ENCODE measurements at regions of chr7 and their contacts with region 1.

Region 1: GRCh38 chr7:148698397-148699023 is at the start of gene CUL1:
- DNase-seq: peak; percentile 74 to 90 (median 79)
- ATAC-seq: peak; percentile 75 to 79
- H3K4me3 Mint-ChIP-seq: peak within 1 kb of the TSS; percentile 87 to 97 (median 92)
- H3K27ac Mint-ChIP-seq: peak within 1 kb of the TSS; percentile 90 to 97 (median 94)
- H3K4me1 Mint-ChIP-seq: peaks cover 35 to 56% (median 51%) of the 10 kb centered on the region in 4 donors
- H3K27me3 Mint-ChIP-seq: no peaks in the 10 kb centered on the region
- polyA plus RNA-seq, gene CUL1: 39.2 to 50.6 (median 39.6) TPM

Region 2: DNA sequence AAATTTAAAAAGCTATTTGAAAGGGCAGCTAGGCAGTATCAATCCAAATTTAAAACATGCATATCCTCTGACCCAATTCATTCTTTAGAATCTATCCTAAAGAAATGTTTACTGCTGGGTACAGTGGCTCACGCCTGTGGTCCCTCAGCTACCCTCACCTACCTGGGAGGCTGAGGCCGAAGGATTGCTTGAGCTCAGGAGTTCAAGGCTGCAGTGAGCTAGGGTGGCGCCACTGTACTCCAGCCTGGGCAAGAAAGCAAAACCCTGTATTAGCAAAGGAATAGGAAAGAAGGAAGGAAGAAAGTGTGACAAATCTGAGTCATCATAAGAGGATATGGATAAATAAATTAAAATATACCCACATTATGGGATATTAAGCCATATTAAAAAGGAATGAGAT is 71.7 kb before region 1 on chr7:
- POLR2A ChIA-PET with region 1: interaction called, 14 read pairs
- DNase-seq: no peak
- ATAC-seq: no peak
- H3K4me3 Mint-ChIP-seq: peak overlapping the region in 3 of 10 donors; percentile 14 to 64 (median 26)
- H3K27ac Mint-ChIP-seq: peak overlapping the region in 1 of 10 donors; percentile 69
- H3K4me1 Mint-ChIP-seq: peaks cover 28 to 60% (median 50%) of the 10 kb centered on the region in 4 donors
- H3K27me3 Mint-ChIP-seq: peaks cover 0 to 12% (median 2%) of the 10 kb centered on the region in 5 donors

Region 3: DNA sequence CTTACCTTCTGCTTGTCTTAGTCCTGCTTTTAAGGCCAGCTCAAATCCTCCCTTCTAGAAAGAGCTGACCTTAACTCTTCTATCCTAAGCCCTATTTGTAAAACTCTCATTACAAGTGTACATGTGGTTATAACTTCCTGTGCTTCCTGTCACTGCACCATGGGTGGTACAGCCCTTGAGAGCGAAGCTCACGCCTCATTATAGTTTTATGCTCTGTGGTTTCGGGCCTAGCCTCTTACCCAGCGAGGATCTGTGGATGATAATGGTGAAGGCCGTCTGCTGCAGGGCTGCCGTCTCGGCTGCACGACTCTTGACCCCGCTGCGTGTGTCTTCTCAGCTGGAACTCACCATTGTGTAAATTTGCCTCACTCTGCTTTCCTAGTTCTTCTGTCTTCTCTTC is 74.8 kb after region 1 on chr7:
- POLR2A ChIA-PET with region 1: interaction called, 14 read pairs
- DNase-seq: peak in 9 of 10 donors; percentile 3 to 70 (median 22)
- ATAC-seq: peak; percentile 97 to 99
- H3K4me3 Mint-ChIP-seq: peak overlapping the region; percentile 9 to 78 (median 63)
- H3K27ac Mint-ChIP-seq: peak overlapping the region; percentile 84 to 95 (median 89)
- H3K4me1 Mint-ChIP-seq: peaks cover 14 to 45% (median 32%) of the 10 kb centered on the region in 4 donors
- H3K27me3 Mint-ChIP-seq: no peaks in the 10 kb centered on the region